CD14-positive monocyte (primary cell): ENCODE measurements at regions of chr16 and their contacts with region 1.

Region 1: GRCh38 chr16:25656639-25657038 is 35.1 kb upstream of the HS3ST4 start:
- DNase-seq: no peak
- H3K4me3 ChIP-seq: no peak overlapping the region
- H3K4me3 Mint-ChIP-seq: no peak overlapping the region
- H3K27ac ChIP-seq: no peak overlapping the region
- H3K27ac Mint-ChIP-seq: no peak overlapping the region
- H3K4me1 ChIP-seq: no peaks in the 10 kb centered on the region
- H3K4me1 Mint-ChIP-seq: no peaks in the 10 kb centered on the region
- H3K27me3 ChIP-seq: no peaks in the 10 kb centered on the region
- H3K27me3 Mint-ChIP-seq: peaks cover 0 to 2% (median 0%) of the 10 kb centered on the region in 3 donors
- CTCF ChIP-seq: no peak

Region 2: DNA sequence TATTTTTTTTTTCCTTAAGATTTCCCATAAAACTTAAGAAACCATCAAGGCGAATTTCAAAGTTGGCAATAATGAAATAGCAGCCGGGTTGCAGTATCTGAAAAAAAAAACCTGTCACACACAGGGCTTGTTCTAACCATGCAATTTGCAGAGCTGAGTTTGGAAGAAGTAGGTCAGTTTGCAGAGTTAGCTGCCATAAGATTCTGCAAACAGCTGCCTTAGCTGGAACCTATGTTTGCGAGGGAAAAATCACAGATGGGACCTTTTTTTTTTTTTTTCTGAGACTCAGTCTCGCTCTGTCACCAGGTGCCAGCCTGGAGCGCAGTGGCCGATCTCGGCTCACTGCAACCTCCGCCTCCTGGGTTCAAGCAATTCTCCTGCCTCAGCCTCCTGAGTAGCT is 63.4 kb before region 1 on chr16:
- intact Hi-C with region 1: loop called in 1 of 2 experiments (anchors 10 kb)
- DNase-seq: no peak
- H3K4me3 ChIP-seq: no peak overlapping the region
- H3K4me3 Mint-ChIP-seq: no peak overlapping the region
- H3K27ac ChIP-seq: no peak overlapping the region
- H3K27ac Mint-ChIP-seq: no peak overlapping the region
- H3K4me1 ChIP-seq: no peaks in the 10 kb centered on the region
- H3K4me1 Mint-ChIP-seq: no peaks in the 10 kb centered on the region
- H3K27me3 ChIP-seq: no peaks in the 10 kb centered on the region
- H3K27me3 Mint-ChIP-seq: peaks cover 0 to 1% (median 0%) of the 10 kb centered on the region in 3 donors
- CTCF ChIP-seq: no peak

Region 3: DNA sequence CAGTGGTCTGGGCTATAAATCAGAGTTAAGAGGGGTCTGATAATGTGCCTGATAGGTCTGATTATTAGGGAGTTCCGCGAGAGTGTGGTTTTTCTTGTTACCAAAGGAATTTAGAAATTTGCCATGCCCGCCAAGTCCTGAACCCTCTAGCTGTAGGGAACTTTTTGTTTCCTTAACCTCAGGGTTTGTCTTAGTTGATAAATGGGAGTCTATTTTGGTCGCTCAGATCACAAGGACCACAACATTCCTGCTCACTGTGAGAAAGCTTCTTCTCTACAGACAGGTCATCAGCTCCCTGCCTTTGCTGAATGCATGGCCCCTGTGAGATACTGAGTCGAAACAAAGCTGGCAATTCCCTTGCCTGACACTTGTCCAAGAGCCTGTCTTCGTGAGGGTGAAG is 532.9 kb after region 1 on chr16:
- intact Hi-C with region 1: no loop called
- DNase-seq: no peak
- H3K4me3 ChIP-seq: no peak overlapping the region
- H3K4me3 Mint-ChIP-seq: no peak overlapping the region
- H3K27ac ChIP-seq: no peak overlapping the region
- H3K27ac Mint-ChIP-seq: no peak overlapping the region
- H3K4me1 ChIP-seq: no peaks in the 10 kb centered on the region
- H3K4me1 Mint-ChIP-seq: no peaks in the 10 kb centered on the region
- H3K27me3 ChIP-seq: no peaks in the 10 kb centered on the region
- H3K27me3 Mint-ChIP-seq: no peaks in the 10 kb centered on the region
- CTCF ChIP-seq: no peak